ENCODE measurements at regions of chr9 and their contacts with region 1.

Region 1: GRCh38 chr9:135440620-135441019 is 39.0 kb upstream of the PPP1R26 start:
- DNase-seq: peak; percentile 24
- ATAC-seq: no peak
- H3K4me3 Mint-ChIP-seq: no peak overlapping the region
- H3K27ac Mint-ChIP-seq: no peak overlapping the region
- H3K4me1 Mint-ChIP-seq: peaks cover 28% of the 10 kb centered on the region
- H3K27me3 Mint-ChIP-seq: no peaks in the 10 kb centered on the region; the same call in 1 of the 2 replicates
- CTCF ChIP-seq: no peak; the same call in 1 of the 2 replicates

Region 2: DNA sequence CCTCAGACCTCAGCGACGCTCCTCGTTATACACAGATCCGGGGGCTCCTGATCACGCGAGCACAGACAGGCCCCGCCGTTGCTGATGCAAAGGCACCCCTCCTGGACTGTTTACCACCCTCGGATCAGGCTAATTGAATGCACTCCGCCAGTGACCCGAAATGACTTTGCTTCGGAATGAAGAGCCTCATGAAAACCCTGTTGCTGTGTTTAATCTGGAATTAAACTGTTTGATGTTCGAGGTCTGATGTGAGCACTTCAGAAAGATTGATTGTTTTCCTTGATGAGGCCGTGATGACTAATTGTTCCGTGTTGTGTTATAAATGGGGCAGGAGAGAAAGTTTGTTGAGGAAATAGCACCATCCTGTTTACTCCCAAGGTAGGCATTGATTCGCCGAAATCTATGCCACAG is 151.5 kb before region 1 on chr9:
- CTCF ChIA-PET with region 1: no interaction called
- POLR2A ChIA-PET with region 1: no interaction called
- DNase-seq: no peak
- ATAC-seq: no peak
- H3K4me3 Mint-ChIP-seq: no peak overlapping the region
- H3K27ac Mint-ChIP-seq: no peak overlapping the region; the same call in 1 of the 2 replicates
- H3K4me1 Mint-ChIP-seq: peaks cover 22% of the 10 kb centered on the region
- H3K27me3 Mint-ChIP-seq: no peaks in the 10 kb centered on the region
- CTCF ChIP-seq: no peak

Region 3: DNA sequence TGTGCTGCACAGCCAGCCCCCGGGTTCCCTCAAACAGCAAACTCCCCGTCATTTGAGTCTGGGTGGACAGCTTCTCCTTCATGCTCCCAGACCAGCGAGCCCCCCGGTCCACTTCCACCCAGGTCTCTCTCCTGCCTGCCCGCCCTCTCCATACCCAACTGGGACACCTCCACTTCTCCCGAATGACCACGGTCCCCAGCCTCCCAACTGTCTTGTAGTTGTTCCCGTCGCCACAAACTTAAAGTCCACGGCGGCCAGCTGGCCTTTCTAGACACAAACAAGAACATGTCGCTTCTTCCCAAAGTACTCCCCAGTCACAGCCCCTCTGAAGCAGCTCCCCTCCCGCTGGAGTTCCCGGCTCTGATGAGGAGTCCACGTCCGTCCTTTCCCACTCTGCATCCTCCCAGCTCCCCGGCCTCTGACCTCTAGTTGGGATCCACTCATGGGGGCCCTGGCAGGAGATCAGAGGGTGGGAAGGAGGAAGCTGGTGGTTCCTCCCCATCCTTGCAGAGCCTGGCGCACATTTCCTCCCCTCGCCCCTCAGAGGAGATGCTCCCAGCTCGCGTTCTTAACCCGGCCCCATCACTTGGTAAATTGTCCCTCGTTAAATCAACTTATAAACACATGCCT is 14.9 kb after region 1 on chr9:
- CTCF ChIA-PET with region 1: interaction called, 12 read pairs
- POLR2A ChIA-PET with region 1: no interaction called
- DNase-seq: no peak
- ATAC-seq: no peak
- H3K4me3 Mint-ChIP-seq: no peak overlapping the region
- H3K27ac Mint-ChIP-seq: no peak overlapping the region
- H3K4me1 Mint-ChIP-seq: no peaks in the 10 kb centered on the region
- H3K27me3 Mint-ChIP-seq: 0 out of 2 replicates have a peak, but pooled peaks cover 3% of the 10 kb centered on the region
- CTCF ChIP-seq: no peak

Region 4: DNA sequence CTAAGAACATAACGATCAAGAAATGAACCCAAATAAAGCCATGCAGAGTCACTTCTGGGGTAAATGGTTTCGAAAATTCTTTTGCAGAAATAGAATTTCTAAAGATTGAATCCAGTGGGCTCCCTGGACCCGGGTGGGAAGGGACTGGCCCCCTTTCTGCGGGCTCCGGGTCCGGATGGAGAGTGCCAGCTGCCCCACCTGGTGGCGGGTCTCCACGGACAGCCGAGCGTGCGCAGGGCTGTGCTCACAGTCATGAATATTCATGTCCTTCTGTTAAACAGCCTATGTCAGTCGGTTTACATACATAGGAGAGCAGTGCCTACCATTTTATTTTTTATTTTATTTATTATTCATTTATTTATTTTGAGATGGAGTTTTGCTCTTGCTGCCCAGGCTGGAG is 34.3 kb after region 1 on chr9:
- CTCF ChIA-PET with region 1: interaction called, 30 read pairs
- POLR2A ChIA-PET with region 1: no interaction called
- DNase-seq: peak; percentile 75
- ATAC-seq: peak; percentile 84
- H3K4me3 Mint-ChIP-seq: no peak overlapping the region; the same call in 1 of the 2 replicates
- H3K27ac Mint-ChIP-seq: no peak overlapping the region
- H3K4me1 Mint-ChIP-seq: peaks cover 37% of the 10 kb centered on the region
- H3K27me3 Mint-ChIP-seq: no peaks in the 10 kb centered on the region; the same call in 1 of the 2 replicates
- CTCF ChIP-seq: no peak

Region 5: DNA sequence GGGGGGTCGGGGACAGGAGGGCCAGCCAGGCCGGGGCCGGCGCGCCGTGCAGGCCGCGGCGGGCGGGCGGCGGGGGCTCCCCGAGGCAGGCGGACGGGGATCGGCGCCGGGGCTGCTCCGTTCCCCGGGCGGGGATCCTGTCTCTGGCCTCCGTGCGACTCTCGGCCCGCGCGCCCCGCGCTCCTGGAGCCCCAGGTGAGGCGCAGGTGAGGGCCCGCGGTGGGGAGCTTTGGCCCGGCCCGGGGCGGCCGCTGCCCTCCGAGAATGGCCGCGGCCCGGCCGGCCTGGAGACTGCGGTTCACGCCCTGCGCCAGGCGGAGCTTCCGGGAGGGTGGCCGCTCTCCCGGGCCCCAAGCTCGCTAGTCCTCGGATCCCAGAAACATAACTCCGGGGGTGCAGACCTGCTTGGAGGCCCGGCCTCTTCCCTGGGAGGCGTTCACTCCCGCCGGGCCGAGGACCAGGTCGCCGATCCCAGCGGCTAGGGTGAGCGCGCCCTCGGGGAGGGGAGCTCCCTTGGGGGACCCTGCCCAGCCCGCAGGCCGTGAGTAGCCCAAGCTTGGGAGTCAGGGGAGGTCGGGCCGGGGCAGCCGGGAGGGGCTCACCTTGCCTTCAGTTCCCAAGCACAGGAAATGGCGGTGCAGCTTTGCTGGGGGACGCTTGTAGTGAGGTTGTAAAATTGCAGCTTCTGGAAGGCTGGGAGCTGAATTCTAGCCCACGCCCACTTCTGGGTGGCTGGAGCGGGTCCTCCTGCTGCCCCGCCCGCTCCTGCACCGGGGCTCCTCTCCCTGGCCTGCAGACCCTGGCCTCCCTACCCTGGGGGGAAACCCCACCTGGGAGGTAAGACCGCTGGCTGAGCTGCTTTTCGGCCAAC is 39.7 kb after region 1 on chr9:
- CTCF ChIA-PET with region 1: interaction called, 30 read pairs
- POLR2A ChIA-PET with region 1: no interaction called
- DNase-seq: peak; percentile 45
- ATAC-seq: peak; percentile 61
- H3K4me3 Mint-ChIP-seq: peak overlapping the region; percentile 66
- H3K27ac Mint-ChIP-seq: no peak overlapping the region
- H3K4me1 Mint-ChIP-seq: peaks cover 21% of the 10 kb centered on the region
- H3K27me3 Mint-ChIP-seq: no peaks in the 10 kb centered on the region; the same call in 1 of the 2 replicates
- CTCF ChIP-seq: no peak

Region 6: GRCh38 chr9:135500525-135501358 is 60.1 kb after region 1 on chr9 and contains the start of gene MRPS2:
- CTCF ChIA-PET with region 1: interaction called, 10 read pairs
- POLR2A ChIA-PET with region 1: no interaction called
- DNase-seq: peak; percentile 93
- ATAC-seq: peak; percentile 86
- H3K4me3 Mint-ChIP-seq: peak within 1 kb of the TSS; percentile 80
- H3K27ac Mint-ChIP-seq: no peak within 1 kb of the TSS
- H3K4me1 Mint-ChIP-seq: peaks cover 13% of the 10 kb centered on the region
- H3K27me3 Mint-ChIP-seq: no peaks in the 10 kb centered on the region
- CTCF ChIP-seq: peak; percentile 32; the same call in 1 of the 2 replicates
- total RNA-seq, gene MRPS2: 74.2 to 78.0 TPM (median 77.6 TPM) in 3 replicates